ENCODE measurements at regions of chr10 and their contacts with region 1.

Region 1: DNA sequence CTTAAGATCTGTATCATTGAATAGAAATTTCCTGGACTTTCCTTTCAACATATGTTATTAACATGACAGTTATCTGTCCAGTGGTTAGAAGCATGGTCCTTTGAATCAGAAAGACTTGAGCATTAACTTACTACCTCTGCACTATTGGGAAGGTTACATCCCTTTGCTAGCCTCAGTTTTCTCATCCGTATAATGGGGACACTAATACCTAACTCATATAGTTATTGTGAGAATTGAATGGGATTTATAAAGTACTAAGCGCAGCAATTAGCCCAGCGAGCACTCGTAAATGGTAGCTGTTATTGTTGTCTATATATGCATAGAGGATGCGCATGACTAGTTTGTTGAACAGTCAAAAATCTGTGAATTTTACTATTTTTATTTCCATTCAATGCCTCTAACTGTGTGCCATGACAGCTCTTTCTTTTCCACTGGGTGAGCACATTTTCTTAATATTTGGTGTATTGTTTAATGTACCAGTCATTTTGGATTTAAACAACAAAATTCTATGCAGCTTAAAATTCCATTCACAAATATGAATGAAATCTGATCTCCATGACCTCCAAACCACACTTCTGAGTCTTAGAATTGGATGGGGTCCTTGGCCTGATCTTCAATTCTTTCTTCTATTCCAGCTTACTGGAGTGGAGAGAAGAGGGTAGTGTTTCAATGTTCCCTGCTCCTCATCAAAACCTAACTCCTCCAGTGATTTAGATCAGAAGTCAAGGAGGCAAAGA is 65.0 kb downstream of the CACNB2 start:
- DNase-seq: peak; percentile 59
- ATAC-seq: peak; percentile 77
- H3K4me3 ChIP-seq: no peak overlapping the region
- H3K27ac ChIP-seq: peak overlapping the region; percentile 37; the same call in 1 of the 2 replicates
- H3K4me1 ChIP-seq: peaks cover 8% of the 10 kb centered on the region
- H3K27me3 ChIP-seq: no peaks in the 10 kb centered on the region
- CTCF ChIP-seq: no peak
- POLR2A ChIP-seq: no peak
- RAD21 ChIP-seq: no peak

Region 2: GRCh38 chr10:18157881-18158280 is 47.4 kb before region 1 on chr10:
- CTCF ChIA-PET with region 1: no interaction called
- POLR2A ChIA-PET with region 1: no interaction called
- dilution Hi-C with region 1: no loop called
- in situ Hi-C with region 1: no loop called
- intact Hi-C with region 1: loop called (anchors 5 kb)
- DNase-seq: peak; percentile 88
- ATAC-seq: peak; percentile 70
- H3K4me3 ChIP-seq: no peak overlapping the region
- H3K27ac ChIP-seq: no peak overlapping the region
- H3K4me1 ChIP-seq: peaks cover 4% of the 10 kb centered on the region
- H3K27me3 ChIP-seq: no peaks in the 10 kb centered on the region
- CTCF ChIP-seq: no peak
- POLR2A ChIP-seq: no peak
- RAD21 ChIP-seq: no peak

Measured in IMR-90 (cell line).